Panc1 (cell line): ENCODE measurements at regions of chr16 and their contacts with region 1.

Region 1: DNA sequence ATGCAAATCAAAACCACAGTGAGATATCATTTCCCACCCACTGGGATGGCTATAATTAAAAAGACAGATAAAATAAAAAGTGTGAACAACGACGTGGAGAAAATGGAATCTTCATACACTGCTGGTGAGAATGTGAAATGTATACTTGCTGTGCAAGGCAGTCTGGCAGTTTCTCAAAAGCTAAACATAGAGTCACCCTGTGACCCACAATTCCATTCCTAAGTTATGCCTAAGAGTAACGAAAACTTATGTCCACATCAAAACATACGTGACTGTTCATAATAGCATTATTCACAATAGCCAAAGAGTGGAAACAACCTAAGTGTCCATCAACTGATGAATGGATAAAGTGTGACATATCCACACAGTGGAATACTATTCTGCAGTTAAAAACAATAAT is 38.1 kb upstream of the VPS4A start:
- DNase-seq: no peak
- ATAC-seq: no peak
- H3K4me3 ChIP-seq: no peak overlapping the region
- H3K27ac ChIP-seq: no peak overlapping the region
- H3K4me1 ChIP-seq: no peaks in the 10 kb centered on the region
- H3K27me3 ChIP-seq: no peaks in the 10 kb centered on the region
- CTCF ChIP-seq: no peak

Region 2: DNA sequence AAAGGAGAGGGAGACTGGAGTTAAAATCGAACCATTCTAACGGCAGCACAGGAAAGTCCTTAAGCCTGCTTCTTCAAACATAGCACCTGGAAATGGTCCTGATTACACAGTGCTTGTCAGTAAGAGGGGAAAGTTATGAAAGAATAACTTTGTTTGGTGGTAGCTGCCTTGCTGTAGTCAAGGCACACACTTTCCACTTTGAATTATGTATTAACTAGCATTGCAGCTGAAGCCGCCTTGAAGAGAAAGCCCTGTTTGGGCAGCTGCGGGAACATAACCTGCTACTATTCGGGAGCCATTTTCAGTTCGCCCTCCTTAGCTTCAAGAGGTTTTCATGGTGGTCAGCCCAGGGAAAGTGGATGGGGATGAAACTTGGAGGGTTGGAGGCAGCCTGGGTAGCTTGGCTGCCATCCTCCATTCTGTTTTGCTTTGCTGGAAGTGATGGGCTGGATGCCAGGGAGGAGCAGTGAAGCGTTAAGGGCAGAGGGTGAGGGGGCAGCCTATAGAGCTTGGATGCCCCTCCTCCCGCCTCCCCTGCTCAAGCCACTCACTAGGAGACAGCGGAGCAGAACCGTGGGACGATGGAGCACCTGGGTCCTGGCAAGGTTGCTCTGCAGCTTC is 172.8 kb before region 1 on chr16:
- CTCF ChIA-PET with region 1: no interaction called
- POLR2A ChIA-PET with region 1: no interaction called
- in situ Hi-C with region 1: no loop called
- intact Hi-C with region 1: no loop called
- DNase-seq: no peak
- ATAC-seq: no peak
- H3K4me3 ChIP-seq: no peak overlapping the region
- H3K27ac ChIP-seq: no peak overlapping the region
- H3K4me1 ChIP-seq: peaks cover 1% of the 10 kb centered on the region
- H3K27me3 ChIP-seq: no peaks in the 10 kb centered on the region
- CTCF ChIP-seq: no peak

Region 3: GRCh38 chr16:69186642-69187445 is 86.2 kb before region 1 on chr16 and contains the start of gene SNTB2:
- CTCF ChIA-PET with region 1: no interaction called
- POLR2A ChIA-PET with region 1: interaction called, 10 read pairs
- in situ Hi-C with region 1: no loop called
- intact Hi-C with region 1: no loop called
- DNase-seq: no peak
- ATAC-seq: peak; percentile 97
- H3K4me3 ChIP-seq: peak within 1 kb of the TSS; percentile 71 to 77
- H3K27ac ChIP-seq: peak within 1 kb of the TSS; percentile 84
- H3K4me1 ChIP-seq: peaks cover 33% of the 10 kb centered on the region
- H3K27me3 ChIP-seq: no peaks in the 10 kb centered on the region
- CTCF ChIP-seq: no peak
- total RNA-seq, gene SNTB2: 40.8 TPM

Region 4: GRCh38 chr16:69253870-69254341 is 19.1 kb before region 1 on chr16:
- CTCF ChIA-PET with region 1: no interaction called
- POLR2A ChIA-PET with region 1: interaction called, 11 read pairs
- in situ Hi-C with region 1: no loop called
- intact Hi-C with region 1: no loop called
- DNase-seq: no peak
- ATAC-seq: no peak
- H3K4me3 ChIP-seq: no peak overlapping the region
- H3K27ac ChIP-seq: no peak overlapping the region
- H3K4me1 ChIP-seq: no peaks in the 10 kb centered on the region
- H3K27me3 ChIP-seq: no peaks in the 10 kb centered on the region
- CTCF ChIP-seq: no peak